ENCODE measurements at regions of chr3 and their contacts with region 1.

Region 1: DNA sequence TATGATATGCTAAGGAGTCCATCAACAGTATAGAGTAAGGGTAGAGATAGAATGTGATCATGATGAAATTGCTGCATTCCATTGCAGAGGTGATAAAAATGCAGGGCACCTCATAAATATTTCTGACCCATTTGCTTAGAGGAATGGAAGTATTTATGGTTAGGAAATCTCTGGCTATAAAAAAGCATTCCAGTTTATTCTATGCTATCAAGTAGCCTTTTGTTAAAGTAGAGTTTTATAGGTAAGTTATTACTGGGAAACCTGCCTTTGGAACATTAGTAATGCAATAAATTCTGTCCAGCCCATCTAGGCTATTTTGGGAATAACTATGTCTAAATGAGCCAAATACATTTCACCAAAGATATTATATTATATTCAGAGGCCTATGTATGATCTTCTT is 19.8 kb upstream of the STRIT1 start:
- DNase-seq: peak; percentile 69
- ATAC-seq: peak; percentile 86
- H3K4me3 ChIP-seq: no peak overlapping the region
- H3K27ac ChIP-seq: peak overlapping the region; percentile 22; the same call in 1 of the 2 replicates
- H3K4me1 ChIP-seq: peaks cover 22% of the 10 kb centered on the region
- H3K27me3 ChIP-seq: no peaks in the 10 kb centered on the region
- CTCF ChIP-seq: no peak

Region 2: GRCh38 chr3:155232605-155233004 is 80.7 kb before region 1 on chr3:
- CTCF ChIA-PET with region 1: no interaction called
- POLR2A ChIA-PET with region 1: no interaction called
- intact Hi-C with region 1: loop called (anchors 1 kb)
- DNase-seq: peak; percentile 98
- ATAC-seq: peak; percentile 95
- H3K4me3 ChIP-seq: 0 out of 2 replicates have a peak overlapping the region, but pooled peaks have one; percentile 3
- H3K27ac ChIP-seq: peak overlapping the region; percentile 97
- H3K4me1 ChIP-seq: peaks cover 26% of the 10 kb centered on the region
- H3K27me3 ChIP-seq: no peaks in the 10 kb centered on the region
- CTCF ChIP-seq: no peak

Measured in PC-3 (cell line).